ENCODE measurements at regions of chr17 and their contacts with region 1.

Region 1: GRCh38 chr17:72539981-72540897 is 419.4 kb downstream of the SOX9 start:
- DNase-seq: peak; percentile 91

Region 2: DNA sequence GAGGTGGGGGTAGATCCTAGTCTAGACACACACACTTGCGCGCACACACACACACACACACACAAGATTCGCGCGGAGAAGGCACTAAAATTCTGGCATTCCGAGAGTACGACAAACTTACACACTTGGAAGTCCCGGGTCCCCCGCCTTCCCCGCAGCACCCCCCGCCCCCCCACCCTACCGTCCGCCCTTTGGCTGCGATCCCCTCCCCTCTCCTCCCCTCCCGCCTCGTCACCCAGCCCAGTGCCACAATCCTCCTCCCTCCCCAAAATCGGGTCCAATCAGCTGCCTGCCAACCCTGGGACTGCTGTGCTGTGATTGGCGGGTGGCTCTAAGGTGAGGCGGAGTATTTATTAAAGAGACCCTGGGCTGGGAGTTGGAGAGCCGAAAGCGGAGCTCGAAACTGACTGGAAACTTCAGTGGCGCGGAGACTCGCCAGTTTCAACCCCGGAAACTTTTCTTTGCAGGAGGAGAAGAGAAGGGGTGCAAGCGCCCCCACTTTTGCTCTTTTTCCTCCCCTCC is 419.5 kb before region 1 on chr17 and contains the start of gene SOX9:
- CTCF ChIA-PET with region 1: interaction called, 4 read pairs
- POLR2A ChIA-PET with region 1: interaction called, 10 read pairs
- DNase-seq: peak; percentile 93

Measured in HEK293T (cell line).